Ascending aorta (tissue), 2 donors: ENCODE measurements at regions of chr3 and their contacts with region 1.

Region 1: DNA sequence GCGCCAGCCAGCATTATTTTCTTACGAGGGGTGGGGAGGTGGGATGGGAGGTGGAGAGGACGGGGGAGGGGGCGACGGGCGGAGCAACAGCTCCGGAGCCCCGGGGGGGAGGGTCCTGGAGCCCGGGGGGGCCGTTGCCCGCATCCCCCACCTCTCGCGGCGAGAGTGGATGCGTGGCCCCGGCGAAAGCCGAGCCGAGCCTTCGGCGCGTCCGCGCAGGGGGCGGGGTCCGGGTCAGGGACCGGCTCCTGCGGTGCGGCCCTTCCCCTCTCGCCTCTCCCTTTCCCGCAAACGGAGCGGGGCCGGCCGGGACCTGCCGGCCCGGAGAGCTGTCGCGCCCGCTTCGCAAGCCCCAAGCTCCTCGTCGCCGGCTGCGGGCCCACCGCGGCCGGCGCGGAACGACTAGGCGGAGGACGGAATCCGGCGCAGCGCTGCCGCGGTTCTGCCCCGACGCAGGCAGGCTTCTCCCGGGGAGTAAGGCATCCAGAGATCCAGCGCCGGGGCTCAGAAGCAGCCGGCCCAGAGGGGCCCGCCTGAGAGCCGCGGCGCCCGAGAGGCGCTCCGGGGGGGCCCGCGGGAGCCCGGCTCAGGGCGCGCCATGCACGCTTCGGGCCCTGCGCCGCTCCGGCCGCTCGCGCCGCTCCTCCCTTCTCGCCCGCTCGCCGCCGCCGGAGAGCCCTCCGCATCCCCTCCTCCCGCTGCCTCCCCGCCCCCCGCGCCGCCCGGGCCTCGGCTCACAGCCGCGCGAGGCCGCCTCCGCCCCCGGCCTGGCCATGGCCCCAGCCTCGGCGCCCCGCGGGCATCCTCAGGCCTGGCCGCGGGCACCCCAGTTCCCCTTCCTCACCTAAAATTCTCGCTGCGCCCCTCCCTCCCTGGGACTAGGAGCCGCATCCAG is 459 bp upstream of the ADCY5 start:
- DNase-seq: no peak
- H3K4me3 ChIP-seq: peak overlapping the region; percentile 74 to 97
- H3K27ac ChIP-seq: peak overlapping the region; percentile 88 to 96
- H3K4me1 ChIP-seq: peaks cover 0 to 10% of the 10 kb centered on the region in 2 donors
- H3K27me3 ChIP-seq: peaks cover 4% of the 10 kb centered on the region
- CTCF ChIP-seq: no peak

Region 2: DNA sequence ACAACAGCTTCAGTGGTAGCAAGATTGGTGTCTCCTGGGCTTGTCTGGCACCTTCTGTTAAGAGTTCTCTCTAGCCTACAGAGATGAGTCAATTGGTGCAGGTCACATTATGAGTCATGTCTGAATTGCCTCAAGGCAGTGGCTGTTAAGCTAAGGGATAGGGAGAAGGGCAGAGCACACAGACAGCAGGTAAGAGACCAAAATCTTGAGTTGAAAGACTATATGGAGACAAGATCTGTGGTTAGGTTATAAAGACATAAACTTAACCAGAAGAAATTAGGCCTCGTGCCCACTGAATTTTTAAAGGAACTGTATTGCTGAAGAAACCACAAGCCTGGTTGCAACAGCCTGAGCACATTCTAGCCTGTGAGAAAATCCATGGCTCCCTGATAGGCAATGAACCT is 915.4 kb before region 1 on chr3:
- intact Hi-C with region 1: no loop called
- DNase-seq: no peak
- H3K4me3 ChIP-seq: no peak overlapping the region
- H3K27ac ChIP-seq: no peak overlapping the region
- H3K4me1 ChIP-seq: no peaks in the 10 kb centered on the region
- H3K27me3 ChIP-seq: no peaks in the 10 kb centered on the region
- CTCF ChIP-seq: no peak

Region 3: DNA sequence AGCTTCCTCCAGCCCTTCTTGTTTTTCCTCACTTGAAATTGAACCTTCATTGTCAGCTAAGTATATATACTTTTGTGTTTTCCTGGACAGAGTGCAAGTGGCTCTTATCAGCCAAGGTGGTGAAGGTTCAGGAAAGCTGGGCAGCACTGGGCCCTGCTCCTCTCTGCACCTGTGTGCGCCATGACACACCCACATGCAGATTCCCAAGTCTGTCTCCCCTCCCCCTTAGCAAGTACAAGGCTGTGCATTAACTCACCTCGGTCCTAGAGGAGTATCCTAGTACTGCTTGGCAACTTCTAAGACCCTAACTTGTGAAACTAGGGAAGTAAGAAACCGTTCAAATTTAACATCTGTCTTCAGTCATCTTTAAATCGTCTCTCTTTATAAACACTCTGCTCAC is 568.7 kb before region 1 on chr3:
- intact Hi-C with region 1: no loop called
- DNase-seq: no peak
- H3K4me3 ChIP-seq: no peak overlapping the region
- H3K27ac ChIP-seq: no peak overlapping the region
- H3K4me1 ChIP-seq: no peaks in the 10 kb centered on the region
- H3K27me3 ChIP-seq: no peaks in the 10 kb centered on the region
- CTCF ChIP-seq: no peak

Region 4: GRCh38 chr3:123258811-123259420 is 190.4 kb before region 1 on chr3:
- intact Hi-C with region 1: no loop called
- DNase-seq: no peak
- H3K4me3 ChIP-seq: no peak overlapping the region
- H3K27ac ChIP-seq: no peak overlapping the region
- H3K4me1 ChIP-seq: no peaks in the 10 kb centered on the region
- H3K27me3 ChIP-seq: no peaks in the 10 kb centered on the region
- CTCF ChIP-seq: peak; percentile 51 to 62 (median 58)

Region 5: GRCh38 chr3:123347684-123348264 is 101.6 kb before region 1 on chr3:
- intact Hi-C with region 1: loop called (anchors 2 kb)
- DNase-seq: no peak
- H3K4me3 ChIP-seq: no peak overlapping the region
- H3K27ac ChIP-seq: peak overlapping the region; percentile 64 to 71
- H3K4me1 ChIP-seq: peaks cover 12 to 67% of the 10 kb centered on the region in 2 donors
- H3K27me3 ChIP-seq: no peaks in the 10 kb centered on the region
- CTCF ChIP-seq: no peak

Region 6: GRCh38 chr3:123412811-123413604 is 36.3 kb before region 1 on chr3:
- intact Hi-C with region 1: loop called (anchors 5 kb)
- DNase-seq: no peak
- H3K4me3 ChIP-seq: peak overlapping the region; percentile 15 to 51
- H3K27ac ChIP-seq: peak overlapping the region; percentile 85 to 87
- H3K4me1 ChIP-seq: peaks cover 14 to 72% of the 10 kb centered on the region in 2 donors
- H3K27me3 ChIP-seq: no peaks in the 10 kb centered on the region
- CTCF ChIP-seq: no peak

Region 7: GRCh38 chr3:123489400-123490004 is 40.2 kb after region 1 on chr3:
- intact Hi-C with region 1: loop called (anchors 2 kb)
- DNase-seq: peak in 1 of 2 donors; percentile 86
- H3K4me3 ChIP-seq: peak overlapping the region in 1 of 2 donors; percentile 32
- H3K27ac ChIP-seq: peak overlapping the region; percentile 76
- H3K4me1 ChIP-seq: peaks cover 0 to 14% of the 10 kb centered on the region in 2 donors
- H3K27me3 ChIP-seq: no peaks in the 10 kb centered on the region
- CTCF ChIP-seq: peak; percentile 88 to 96 (median 92)